ENCODE measurements at regions of chr3 and their contacts with region 1.

Region 1: DNA sequence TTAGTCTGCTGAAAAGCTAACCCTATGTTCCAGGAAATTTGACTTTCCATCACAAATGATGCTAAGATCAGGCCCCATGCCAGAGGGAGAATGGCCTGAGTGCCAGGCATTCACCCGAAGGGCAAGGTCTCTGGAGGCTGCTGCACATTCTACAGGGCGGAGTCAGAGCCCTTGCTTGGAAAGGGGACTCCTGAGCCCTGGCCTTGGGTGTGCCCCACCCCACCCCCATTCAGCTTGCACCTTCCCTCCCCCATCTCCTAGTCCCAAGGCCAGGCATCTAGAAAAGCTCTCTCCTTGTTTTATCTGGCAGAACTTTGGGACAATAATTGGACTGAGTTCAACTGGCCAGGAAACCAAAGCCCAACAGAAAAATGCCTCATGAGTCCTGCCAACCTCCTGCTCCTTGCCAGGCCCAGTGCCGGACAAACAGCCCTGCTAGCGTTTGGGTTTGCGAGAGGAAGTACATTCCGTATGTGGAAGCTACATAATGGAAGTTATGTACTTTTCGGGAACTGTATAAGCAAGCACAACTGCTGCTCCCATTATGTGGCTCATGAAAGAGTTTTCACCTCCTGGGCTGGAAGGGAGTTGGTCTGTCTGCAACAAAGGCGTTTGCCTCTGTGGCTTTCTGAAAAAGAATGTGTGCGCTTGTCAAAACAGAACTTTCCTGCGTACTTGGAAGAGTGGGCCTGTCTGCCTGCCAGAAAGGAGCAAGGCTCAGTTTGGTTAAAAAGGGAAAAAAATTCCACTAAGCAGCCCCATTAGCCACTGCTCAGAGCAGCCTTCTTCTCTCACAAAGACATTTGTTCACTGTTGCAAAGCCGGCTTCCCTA is 321.5 kb upstream of the CTNNB1 start:
- DNase-seq: peak; percentile 74 to 93
- H3K4me3 ChIP-seq: peak overlapping the region; percentile 20 to 40
- H3K27ac ChIP-seq: peak overlapping the region; percentile 65 to 68
- H3K4me1 ChIP-seq: peaks cover 0 to 64% (median 37%) of the 10 kb centered on the region in 4 donors
- H3K27me3 ChIP-seq: no peaks in the 10 kb centered on the region
- CTCF ChIP-seq: no peak

Region 2: DNA sequence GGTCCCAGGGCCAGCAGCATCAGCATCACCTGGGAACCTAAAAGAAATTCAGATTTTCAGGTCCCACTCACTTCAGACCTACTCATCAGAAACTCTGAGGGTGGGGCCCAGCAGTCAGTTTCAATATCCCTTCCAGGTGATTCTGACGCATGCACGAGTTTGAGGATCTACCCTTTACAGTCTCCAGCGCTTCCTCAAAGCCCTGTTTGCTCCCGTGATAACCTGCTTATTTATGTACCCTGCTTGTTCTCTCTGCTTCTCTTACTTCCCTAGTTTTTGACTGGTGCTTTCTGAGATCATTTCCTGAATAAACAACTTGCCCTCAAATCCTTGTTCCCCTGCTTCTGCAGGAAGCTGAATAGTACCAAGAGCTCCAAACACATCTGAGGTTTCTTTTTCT is 107.8 kb before region 1 on chr3:
- intact Hi-C with region 1: loop called (anchors 10 kb)
- DNase-seq: peak in 1 of 2 donors; percentile 41
- H3K4me3 ChIP-seq: no peak overlapping the region
- H3K27ac ChIP-seq: peak overlapping the region; percentile 37 to 61
- H3K4me1 ChIP-seq: peaks cover 0 to 46% (median 37%) of the 10 kb centered on the region in 4 donors
- H3K27me3 ChIP-seq: no peaks in the 10 kb centered on the region
- CTCF ChIP-seq: no peak

Region 3: DNA sequence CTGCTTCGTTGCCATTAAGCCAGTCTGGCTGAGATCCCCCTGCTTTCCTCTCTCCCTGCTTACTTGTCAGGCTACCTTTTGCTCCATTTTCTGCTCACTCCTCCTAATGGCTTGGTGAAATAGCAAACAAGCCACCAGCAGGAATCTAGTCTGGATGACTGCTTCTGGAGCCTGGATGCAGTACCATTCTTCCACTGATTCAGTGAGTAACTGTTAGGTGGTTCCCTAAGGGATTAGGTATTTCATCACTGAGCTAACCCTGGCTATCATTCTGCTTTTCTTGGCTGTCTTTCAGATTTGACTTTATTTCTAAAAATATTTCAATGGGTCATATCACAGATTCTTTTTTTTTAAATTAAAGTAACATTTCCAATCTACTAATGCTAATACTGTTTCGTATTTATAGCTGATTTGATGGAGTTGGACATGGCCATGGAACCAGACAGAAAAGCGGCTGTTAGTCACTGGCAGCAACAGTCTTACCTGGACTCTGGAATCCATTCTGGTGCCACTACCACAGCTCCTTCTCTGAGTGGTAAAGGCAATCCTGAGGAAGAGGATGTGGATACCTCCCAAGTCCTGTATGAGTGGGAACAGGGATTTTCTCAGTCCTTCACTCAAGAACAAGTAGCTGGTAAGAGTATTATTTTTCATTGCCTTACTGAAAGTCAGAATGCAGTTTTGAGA is 346.4 kb after region 1 on chr3:
- intact Hi-C with region 1: loop called (anchors 10 kb)
- DNase-seq: peak in 1 of 2 donors; percentile 68
- H3K4me3 ChIP-seq: no peak overlapping the region
- H3K27ac ChIP-seq: peak overlapping the region; percentile 49 to 58
- H3K4me1 ChIP-seq: peaks cover 0 to 69% (median 44%) of the 10 kb centered on the region in 4 donors
- H3K27me3 ChIP-seq: no peaks in the 10 kb centered on the region
- CTCF ChIP-seq: peak; percentile 32 to 53